ENCODE measurements at regions of chr12 and their contacts with region 1.

Region 1: DNA sequence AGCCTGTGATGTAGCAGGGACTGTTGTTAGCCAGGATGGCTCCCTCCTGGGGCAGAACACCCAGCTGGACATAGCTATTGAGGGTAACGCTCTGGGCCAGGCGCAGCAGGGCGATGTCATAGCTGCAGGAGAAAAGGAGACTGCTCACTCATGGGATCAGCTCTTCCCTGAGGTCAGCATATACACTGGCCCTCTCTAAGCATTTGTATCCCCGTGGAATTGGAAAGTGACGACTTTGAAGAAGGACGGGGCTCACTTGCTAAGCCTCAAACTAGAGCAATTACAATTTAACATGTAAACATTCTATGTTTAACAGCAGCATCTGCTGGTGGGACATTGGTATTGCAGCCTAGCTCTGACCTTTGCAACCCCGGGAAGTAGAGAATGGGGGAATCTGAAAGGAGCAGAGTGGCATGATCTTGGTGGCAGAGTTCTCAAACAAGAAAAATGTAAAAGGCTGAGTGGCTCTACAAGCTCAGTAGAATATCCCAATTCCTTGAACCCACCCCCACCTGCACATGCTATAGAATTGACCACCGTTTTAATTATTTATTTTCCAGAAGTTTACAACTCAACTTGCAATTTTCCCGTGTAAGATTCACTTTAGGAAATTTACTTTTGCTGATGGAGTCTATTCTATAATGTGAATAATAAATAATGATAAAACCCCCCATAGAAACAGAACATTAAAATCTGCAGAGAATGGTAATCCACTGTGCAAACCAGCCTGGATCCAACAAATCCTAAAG is 5.0 kb downstream of the CELA1 start:
- DNase-seq: peak; percentile 36 to 79 (median 69)
- ATAC-seq: peak; percentile 96
- H3K4me3 ChIP-seq: peak overlapping the region; percentile 6
- H3K4me3 Mint-ChIP-seq: peak overlapping the region; percentile 41 to 84 (median 65)
- H3K27ac ChIP-seq: peak overlapping the region; percentile 39
- H3K27ac Mint-ChIP-seq: peak overlapping the region; percentile 38 to 92 (median 84)
- H3K4me1 ChIP-seq: peaks cover 4 to 8% of the 10 kb centered on the region in 2 donors
- H3K4me1 Mint-ChIP-seq: peaks cover 14 to 26% (median 16%) of the 10 kb centered on the region in 7 donors
- H3K27me3 ChIP-seq: no peaks in the 10 kb centered on the region
- H3K27me3 Mint-ChIP-seq: no peaks in the 10 kb centered on the region

Region 2: DNA sequence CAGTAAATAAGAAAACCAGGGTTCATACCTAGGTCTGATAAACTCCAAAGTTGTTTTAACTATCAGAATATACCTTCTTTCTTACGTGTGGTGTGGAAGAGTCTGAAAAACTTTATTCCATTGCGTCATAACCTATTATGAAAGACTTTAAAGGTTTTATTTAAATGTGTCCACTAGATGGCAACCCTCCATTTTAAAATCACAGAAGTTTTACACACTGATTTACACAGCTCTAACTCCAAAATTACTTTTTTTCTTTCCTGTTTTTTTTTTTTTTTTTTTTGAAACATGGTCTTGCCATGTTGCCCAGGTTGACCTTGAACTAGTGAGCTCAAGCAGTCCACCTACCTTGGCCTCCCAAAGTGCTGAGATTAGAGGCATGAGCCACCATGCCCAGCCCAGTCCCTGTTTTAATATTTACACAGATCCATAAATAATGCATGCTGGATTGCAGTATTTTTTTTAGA is 516.0 kb before region 1 on chr12:
- CTCF ChIA-PET with region 1: interaction called, 9 read pairs
- POLR2A ChIA-PET with region 1: no interaction called
- intact Hi-C with region 1: loop called (anchors 1 to 2 kb)
- DNase-seq: peak in 7 of 9 donors; percentile 45 to 76 (median 69)
- ATAC-seq: peak; percentile 91
- H3K4me3 ChIP-seq: no peak overlapping the region
- H3K4me3 Mint-ChIP-seq: peak overlapping the region in 2 of 10 donors; percentile 34 to 77
- H3K27ac ChIP-seq: peak overlapping the region; percentile 73
- H3K27ac Mint-ChIP-seq: peak overlapping the region; percentile 56 to 99 (median 91)
- H3K4me1 ChIP-seq: peaks cover 0 to 4% of the 10 kb centered on the region in 2 donors
- H3K4me1 Mint-ChIP-seq: peaks cover 0 to 9% (median 6%) of the 10 kb centered on the region in 7 donors
- H3K27me3 ChIP-seq: no peaks in the 10 kb centered on the region
- H3K27me3 Mint-ChIP-seq: no peaks in the 10 kb centered on the region

Region 3: GRCh38 chr12:51262758-51263177 is 78.7 kb before region 1 on chr12:
- CTCF ChIA-PET with region 1: interaction called, 23 read pairs
- POLR2A ChIA-PET with region 1: interaction called, 4 read pairs
- intact Hi-C with region 1: no loop called
- DNase-seq: peak in 2 of 9 donors; percentile 15 to 21
- ATAC-seq: peak; percentile 41
- H3K4me3 ChIP-seq: no peak overlapping the region
- H3K4me3 Mint-ChIP-seq: no peak overlapping the region
- H3K27ac ChIP-seq: no peak overlapping the region
- H3K27ac Mint-ChIP-seq: peak overlapping the region in 1 of 9 donors; percentile 8
- H3K4me1 ChIP-seq: peaks cover 6 to 9% of the 10 kb centered on the region in 2 donors
- H3K4me1 Mint-ChIP-seq: peaks cover 7 to 22% (median 19%) of the 10 kb centered on the region in 7 donors
- H3K27me3 ChIP-seq: no peaks in the 10 kb centered on the region
- H3K27me3 Mint-ChIP-seq: peaks cover 0 to 4% (median 0%) of the 10 kb centered on the region in 5 donors

Region 4: GRCh38 chr12:51307655-51308593 is 33.5 kb before region 1 on chr12:
- CTCF ChIA-PET with region 1: interaction called, 118 read pairs
- POLR2A ChIA-PET with region 1: interaction called, 320 read pairs
- intact Hi-C with region 1: loop called (anchors 1 to 5 kb)
- DNase-seq: peak in 3 of 9 donors; percentile 24 to 45 (median 33)
- ATAC-seq: no peak
- H3K4me3 ChIP-seq: no peak overlapping the region
- H3K4me3 Mint-ChIP-seq: peak overlapping the region in 8 of 10 donors; percentile 22 to 60 (median 50)
- H3K27ac ChIP-seq: peak overlapping the region; percentile 23
- H3K27ac Mint-ChIP-seq: peak overlapping the region; percentile 65 to 91 (median 86)
- H3K4me1 ChIP-seq: peaks cover 18 to 31% of the 10 kb centered on the region in 2 donors
- H3K4me1 Mint-ChIP-seq: peaks cover 33 to 82% (median 63%) of the 10 kb centered on the region in 7 donors
- H3K27me3 ChIP-seq: no peaks in the 10 kb centered on the region
- H3K27me3 Mint-ChIP-seq: no peaks in the 10 kb centered on the region

Region 5: GRCh38 chr12:51326762-51327439 is 14.5 kb before region 1 on chr12:
- CTCF ChIA-PET with region 1: interaction called, 88 read pairs
- POLR2A ChIA-PET with region 1: interaction called, 320 read pairs
- intact Hi-C with region 1: loop called (anchors 1 kb)
- DNase-seq: peak in 2 of 9 donors; percentile 10 to 27
- ATAC-seq: peak; percentile 34
- H3K4me3 ChIP-seq: no peak overlapping the region
- H3K4me3 Mint-ChIP-seq: peak overlapping the region; percentile 49 to 85 (median 72)
- H3K27ac ChIP-seq: peak overlapping the region; percentile 60
- H3K27ac Mint-ChIP-seq: peak overlapping the region; percentile 76 to 96 (median 93)
- H3K4me1 ChIP-seq: peaks cover 51 to 67% of the 10 kb centered on the region in 2 donors
- H3K4me1 Mint-ChIP-seq: peaks cover 45 to 92% (median 67%) of the 10 kb centered on the region in 7 donors
- H3K27me3 ChIP-seq: no peaks in the 10 kb centered on the region
- H3K27me3 Mint-ChIP-seq: no peaks in the 10 kb centered on the region

Region 6: GRCh38 chr12:51531978-51532497 is 190.6 kb after region 1 on chr12:
- CTCF ChIA-PET with region 1: interaction called, 5 read pairs
- POLR2A ChIA-PET with region 1: no interaction called
- intact Hi-C with region 1: loop called in 1 of 2 experiments (anchors 5 kb)
- DNase-seq: peak; percentile 44 to 78 (median 68)
- ATAC-seq: peak; percentile 94
- H3K4me3 ChIP-seq: no peak overlapping the region
- H3K4me3 Mint-ChIP-seq: no peak overlapping the region
- H3K27ac ChIP-seq: no peak overlapping the region
- H3K27ac Mint-ChIP-seq: peak overlapping the region in 5 of 9 donors; percentile 11 to 52 (median 32)
- H3K4me1 ChIP-seq: peaks cover 0 to 4% of the 10 kb centered on the region in 2 donors
- H3K4me1 Mint-ChIP-seq: peaks cover 0 to 11% (median 6%) of the 10 kb centered on the region in 7 donors
- H3K27me3 ChIP-seq: no peaks in the 10 kb centered on the region
- H3K27me3 Mint-ChIP-seq: peaks cover 0 to 32% (median 4%) of the 10 kb centered on the region in 5 donors

Measured in naive thymus-derived CD4-positive, alpha-beta T cell (primary cell).